ENCODE measurements at regions of chr19 and their contacts with region 1.

Region 1: GRCh38 chr19:49443366-49444099 is 2.2 kb upstream of the SLC17A7 start:
- DNase-seq: peak; percentile 89 to 96 (median 91)
- ATAC-seq: peak; percentile 89
- H3K4me3 ChIP-seq: peak overlapping the region; percentile 66
- H3K4me3 Mint-ChIP-seq: peak overlapping the region; percentile 85
- H3K27ac ChIP-seq: no peak overlapping the region
- H3K27ac Mint-ChIP-seq: peak overlapping the region; percentile 84
- H3K4me1 ChIP-seq: peaks cover 47% of the 10 kb centered on the region
- H3K4me1 Mint-ChIP-seq: peaks cover 41% of the 10 kb centered on the region
- H3K27me3 ChIP-seq: peaks cover 39% of the 10 kb centered on the region in 2 experiments
- H3K27me3 Mint-ChIP-seq: peaks cover 47% of the 10 kb centered on the region
- CTCF ChIP-seq: peak; percentile 95

Region 2: GRCh38 chr19:49004964-49005614 is 438.4 kb before region 1 on chr19:
- CTCF ChIA-PET with region 1: no interaction called
- POLR2A ChIA-PET with region 1: no interaction called
- intact Hi-C with region 1: no loop called
- DNase-seq: no peak
- ATAC-seq: no peak
- H3K4me3 ChIP-seq: no peak overlapping the region
- H3K4me3 Mint-ChIP-seq: no peak overlapping the region
- H3K27ac ChIP-seq: no peak overlapping the region
- H3K27ac Mint-ChIP-seq: no peak overlapping the region
- H3K4me1 ChIP-seq: no peaks in the 10 kb centered on the region
- H3K4me1 Mint-ChIP-seq: no peaks in the 10 kb centered on the region
- H3K27me3 ChIP-seq: no peaks in the 10 kb centered on the region
- H3K27me3 Mint-ChIP-seq: no peaks in the 10 kb centered on the region
- CTCF ChIP-seq: no peak

Region 3: DNA sequence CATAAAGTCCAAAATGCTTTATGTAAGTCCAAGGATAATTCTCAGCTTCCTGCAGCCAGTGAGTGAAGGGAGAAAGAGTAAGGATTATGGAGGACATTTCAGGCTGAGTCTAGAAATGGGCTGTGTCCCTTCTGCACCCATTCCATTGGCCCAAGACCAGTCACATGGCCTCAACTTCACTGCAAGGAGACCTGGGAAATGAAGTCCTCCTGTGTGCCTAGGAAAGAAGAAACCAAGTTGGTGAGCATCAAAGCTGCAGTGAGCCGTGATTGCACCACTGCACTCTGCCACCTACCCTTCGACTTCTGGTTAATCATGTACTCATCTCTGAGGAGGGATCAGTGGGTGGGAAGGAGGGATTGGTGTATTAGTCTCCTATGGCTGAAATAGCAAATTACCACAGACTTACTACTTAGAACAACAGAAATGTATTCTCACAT is 111.9 kb before region 1 on chr19:
- CTCF ChIA-PET with region 1: interaction called, 3 read pairs
- POLR2A ChIA-PET with region 1: no interaction called
- intact Hi-C with region 1: loop called in 1 of 2 experiments (anchors 5 kb)
- DNase-seq: peak; percentile 33 to 88 (median 49)
- ATAC-seq: peak; percentile 72
- H3K4me3 ChIP-seq: no peak overlapping the region
- H3K4me3 Mint-ChIP-seq: peak overlapping the region; percentile 72
- H3K27ac ChIP-seq: no peak overlapping the region
- H3K27ac Mint-ChIP-seq: peak overlapping the region; percentile 93
- H3K4me1 ChIP-seq: peaks cover 63% of the 10 kb centered on the region
- H3K4me1 Mint-ChIP-seq: peaks cover 79% of the 10 kb centered on the region
- H3K27me3 ChIP-seq: no peaks in the 10 kb centered on the region
- H3K27me3 Mint-ChIP-seq: no peaks in the 10 kb centered on the region
- CTCF ChIP-seq: no peak

Region 4: DNA sequence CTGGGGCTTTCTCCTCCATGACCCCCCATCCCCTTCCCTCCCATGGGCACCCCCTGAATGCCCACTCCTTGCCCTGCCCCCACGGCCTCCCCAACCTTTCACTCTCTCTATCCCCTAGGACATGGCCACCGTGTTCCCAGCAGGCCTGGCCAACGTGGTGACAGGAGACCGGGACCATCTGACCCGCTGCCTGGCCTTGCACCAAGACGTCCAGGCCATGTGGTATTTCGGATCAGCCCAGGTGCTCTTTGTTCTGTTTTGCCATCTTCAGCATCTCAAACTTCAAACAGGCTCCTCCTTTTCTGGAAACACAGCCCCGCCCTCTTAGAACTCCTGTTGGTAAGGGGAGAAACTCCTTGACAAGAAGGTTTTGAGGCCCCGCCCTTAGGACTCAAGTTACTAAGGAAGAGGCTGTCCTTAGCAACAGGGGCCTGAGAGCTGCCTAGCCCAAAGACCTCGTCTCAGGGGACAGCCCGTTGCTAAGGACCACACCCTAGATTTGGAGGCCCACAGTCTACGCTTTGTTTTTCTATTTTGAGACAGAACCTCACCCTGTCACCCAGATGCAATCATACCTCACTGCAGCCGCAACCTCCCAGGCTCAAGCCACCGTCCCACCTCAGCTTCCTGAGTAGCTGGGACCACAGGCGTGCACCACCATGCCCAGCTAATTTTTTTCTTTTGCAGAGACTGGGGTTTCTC is 25.4 kb after region 1 on chr19:
- CTCF ChIA-PET with region 1: interaction called, 19 read pairs
- POLR2A ChIA-PET with region 1: interaction called, 5 read pairs
- intact Hi-C with region 1: loop called (anchors 1 kb)
- DNase-seq: peak; percentile 74 to 99 (median 84)
- ATAC-seq: peak; percentile 75
- H3K4me3 ChIP-seq: peak overlapping the region; percentile 9
- H3K4me3 Mint-ChIP-seq: peak overlapping the region; percentile 84
- H3K27ac ChIP-seq: peak overlapping the region; percentile 86 to 96
- H3K27ac Mint-ChIP-seq: peak overlapping the region; percentile 98
- H3K4me1 ChIP-seq: peaks cover 96% of the 10 kb centered on the region
- H3K4me1 Mint-ChIP-seq: peaks cover 42% of the 10 kb centered on the region
- H3K27me3 ChIP-seq: no peaks in the 10 kb centered on the region
- H3K27me3 Mint-ChIP-seq: no peaks in the 10 kb centered on the region
- CTCF ChIP-seq: no peak

Region 5: GRCh38 chr19:49473868-49474544 is 30.5 kb after region 1 on chr19 and contains the start of gene FLT3LG:
- CTCF ChIA-PET with region 1: interaction called, 19 read pairs
- POLR2A ChIA-PET with region 1: interaction called, 5 read pairs
- intact Hi-C with region 1: loop called (anchors 1 kb)
- DNase-seq: peak; percentile 85 to 98 (median 90)
- ATAC-seq: peak; percentile 49
- H3K4me3 ChIP-seq: peak within 1 kb of the TSS; percentile 97
- H3K4me3 Mint-ChIP-seq: peak within 1 kb of the TSS; percentile 100
- H3K27ac ChIP-seq: peak within 1 kb of the TSS; percentile 90 to 98
- H3K27ac Mint-ChIP-seq: peak within 1 kb of the TSS; percentile 98
- H3K4me1 ChIP-seq: peaks cover 78% of the 10 kb centered on the region
- H3K4me1 Mint-ChIP-seq: peaks cover 59% of the 10 kb centered on the region
- H3K27me3 ChIP-seq: no peaks in the 10 kb centered on the region
- H3K27me3 Mint-ChIP-seq: no peaks in the 10 kb centered on the region
- CTCF ChIP-seq: peak; percentile 95
- total RNA-seq, gene FLT3LG: 311 to 325 TPM

Region 6: GRCh38 chr19:49512970-49513745 is 69.6 kb after region 1 on chr19:
- CTCF ChIA-PET with region 1: no interaction called
- POLR2A ChIA-PET with region 1: no interaction called
- intact Hi-C with region 1: no loop called
- DNase-seq: peak in 5 of 14 experiments; percentile 27 to 63 (median 56)
- ATAC-seq: peak; percentile 68
- H3K4me3 ChIP-seq: peak overlapping the region; percentile 60
- H3K4me3 Mint-ChIP-seq: peak overlapping the region; percentile 90
- H3K27ac ChIP-seq: peak overlapping the region; percentile 46 to 62
- H3K27ac Mint-ChIP-seq: peak overlapping the region; percentile 82
- H3K4me1 ChIP-seq: peaks cover 44% of the 10 kb centered on the region
- H3K4me1 Mint-ChIP-seq: peaks cover 46% of the 10 kb centered on the region
- H3K27me3 ChIP-seq: no peaks in the 10 kb centered on the region
- H3K27me3 Mint-ChIP-seq: no peaks in the 10 kb centered on the region
- CTCF ChIP-seq: no peak